K562 (cell line): ENCODE measurements at regions of chr9 and their contacts with region 1.

Region 1: GRCh38 chr9:87909310-87910041 is 8.3 kb upstream of the SPATA31C1 start:
- DNase-seq: peak in 3 of 4 experiments; percentile 7 to 73 (median 42)
- ATAC-seq: peak; percentile 98
- H3K4me3 ChIP-seq: no peak overlapping the region
- H3K27ac ChIP-seq: no peak overlapping the region
- H3K4me1 ChIP-seq: no peaks in the 10 kb centered on the region; a peak in 2 of 5 replicates
- H3K27me3 ChIP-seq: no peaks in the 10 kb centered on the region; a peak in 1 of 5 replicates
- CTCF ChIP-seq: peak; percentile 49 to 51 (median 50)
- EP300 ChIP-seq: no peak
- POLR2A ChIP-seq: no peak
- RAD21 ChIP-seq: peak; percentile 19 to 37; a peak in 2 of 4 replicates

Region 2: DNA sequence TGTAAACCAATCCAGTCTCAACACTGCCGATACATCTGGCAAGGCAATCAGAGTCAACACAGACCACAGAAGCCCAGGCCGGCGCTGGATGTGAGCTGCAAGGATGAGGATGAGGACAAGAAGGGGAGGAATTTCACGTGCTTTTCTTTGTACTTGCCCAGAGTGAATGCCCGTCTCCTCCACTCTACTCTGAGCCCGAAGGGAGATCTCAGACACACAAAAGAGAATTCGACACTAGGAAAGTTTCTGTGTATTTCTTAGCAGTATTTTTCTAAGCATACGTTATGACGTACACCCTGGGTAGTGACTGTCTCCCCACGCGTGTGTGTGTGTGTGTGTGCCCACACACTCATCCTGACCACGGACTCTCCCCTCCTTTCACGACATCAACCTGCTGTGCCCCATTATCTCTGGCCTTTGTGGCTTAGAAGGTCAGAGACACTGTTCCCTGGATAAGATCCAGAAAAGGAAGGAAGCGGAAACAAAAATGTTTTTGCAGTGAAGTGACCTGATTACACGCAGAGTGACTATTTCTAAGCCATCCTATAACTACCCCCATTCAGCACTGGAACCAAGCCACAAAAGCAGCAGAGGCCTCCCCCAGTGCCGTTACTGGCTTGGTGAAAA is 639.1 kb before region 1 on chr9:
- CTCF ChIA-PET with region 1: no interaction called
- POLR2A ChIA-PET with region 1: no interaction called
- in situ Hi-C with region 1: no loop called
- intact Hi-C with region 1: no loop called
- DNase-seq: no peak
- ATAC-seq: no peak
- H3K4me3 ChIP-seq: no peak overlapping the region
- H3K27ac ChIP-seq: no peak overlapping the region
- H3K4me1 ChIP-seq: no peaks in the 10 kb centered on the region
- H3K27me3 ChIP-seq: peaks cover 0 to 25% of the 10 kb centered on the region in 2 experiments; a peak in 2 of 5 replicates
- CTCF ChIP-seq: no peak
- EP300 ChIP-seq: no peak
- POLR2A ChIP-seq: no peak
- RAD21 ChIP-seq: no peak

Region 3: GRCh38 chr9:87620731-87621322 is 288.6 kb before region 1 on chr9:
- CTCF ChIA-PET with region 1: no interaction called
- POLR2A ChIA-PET with region 1: no interaction called
- in situ Hi-C with region 1: no loop called
- intact Hi-C with region 1: no loop called
- DNase-seq: no peak
- ATAC-seq: no peak
- H3K4me3 ChIP-seq: no peak overlapping the region
- H3K27ac ChIP-seq: no peak overlapping the region
- H3K4me1 ChIP-seq: no peaks in the 10 kb centered on the region; a peak in 1 of 5 replicates
- H3K27me3 ChIP-seq: no peaks in the 10 kb centered on the region
- CTCF ChIP-seq: no peak
- EP300 ChIP-seq: no peak
- POLR2A ChIP-seq: no peak
- RAD21 ChIP-seq: no peak

Region 4: GRCh38 chr9:88041447-88041846 is 132.0 kb after region 1 on chr9:
- CTCF ChIA-PET with region 1: no interaction called
- POLR2A ChIA-PET with region 1: no interaction called
- in situ Hi-C with region 1: no loop called
- intact Hi-C with region 1: loop called (anchors 5 kb)
- DNase-seq: no peak
- ATAC-seq: no peak
- H3K4me3 ChIP-seq: no peak overlapping the region
- H3K27ac ChIP-seq: no peak overlapping the region
- H3K4me1 ChIP-seq: no peaks in the 10 kb centered on the region
- H3K27me3 ChIP-seq: no peaks in the 10 kb centered on the region
- CTCF ChIP-seq: peak; percentile 30 to 37 (median 35); a peak in 2 of 6 replicates
- EP300 ChIP-seq: no peak
- POLR2A ChIP-seq: no peak
- RAD21 ChIP-seq: peak in 1 of 2 experiments; percentile 56; a peak in 3 of 4 replicates